ENCODE measurements at regions of chr11 and their contacts with region 1.

Region 1: DNA sequence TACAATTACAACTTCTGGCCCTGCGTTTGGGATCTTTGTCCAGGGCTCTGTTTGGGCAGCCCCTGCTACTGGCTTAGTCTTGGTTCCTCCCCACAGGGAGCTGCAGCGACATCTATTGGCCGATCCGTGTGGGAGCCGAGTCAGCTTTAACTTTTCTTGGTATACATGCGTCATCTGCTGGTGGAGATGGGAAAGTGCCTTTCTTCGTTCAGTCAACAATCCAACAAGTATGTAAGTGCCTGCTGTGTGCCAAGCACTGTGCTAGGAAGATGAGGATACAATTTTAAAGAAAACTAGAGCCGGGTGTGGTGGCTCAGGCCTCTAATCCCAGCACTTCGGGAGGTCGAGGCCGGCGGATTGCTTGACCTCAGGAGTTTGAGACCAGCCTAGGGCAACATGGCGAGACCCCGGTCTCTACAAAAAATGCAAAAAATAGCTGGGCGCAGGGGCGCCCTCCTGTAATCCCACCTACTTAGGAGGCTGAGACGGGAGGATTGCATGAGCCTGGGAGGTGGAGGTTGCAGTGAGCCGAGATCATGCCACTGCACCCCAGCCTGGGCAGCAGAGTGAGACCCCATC is 8.2 kb downstream of the TPBGL start:
- DNase-seq: peak; percentile 93
- ATAC-seq: peak; percentile 93
- H3K4me3 Mint-ChIP-seq: no peak overlapping the region
- H3K27ac Mint-ChIP-seq: no peak overlapping the region
- H3K4me1 Mint-ChIP-seq: no peaks in the 10 kb centered on the region
- H3K27me3 Mint-ChIP-seq: peaks cover 23% of the 10 kb centered on the region

Region 2: GRCh38 chr11:74773481-74773880 is 475.3 kb before region 1 on chr11:
- CTCF ChIA-PET with region 1: no interaction called
- POLR2A ChIA-PET with region 1: no interaction called
- DNase-seq: no peak
- ATAC-seq: no peak
- H3K4me3 Mint-ChIP-seq: no peak overlapping the region
- H3K27ac Mint-ChIP-seq: no peak overlapping the region
- H3K4me1 Mint-ChIP-seq: peaks cover 16% of the 10 kb centered on the region
- H3K27me3 Mint-ChIP-seq: no peaks in the 10 kb centered on the region

Region 3: GRCh38 chr11:75022759-75023396 is 225.9 kb before region 1 on chr11:
- CTCF ChIA-PET with region 1: interaction called, 26 read pairs
- POLR2A ChIA-PET with region 1: no interaction called
- DNase-seq: peak; percentile 81
- ATAC-seq: peak; percentile 90
- H3K4me3 Mint-ChIP-seq: no peak overlapping the region
- H3K27ac Mint-ChIP-seq: no peak overlapping the region
- H3K4me1 Mint-ChIP-seq: no peaks in the 10 kb centered on the region
- H3K27me3 Mint-ChIP-seq: no peaks in the 10 kb centered on the region

Region 4: DNA sequence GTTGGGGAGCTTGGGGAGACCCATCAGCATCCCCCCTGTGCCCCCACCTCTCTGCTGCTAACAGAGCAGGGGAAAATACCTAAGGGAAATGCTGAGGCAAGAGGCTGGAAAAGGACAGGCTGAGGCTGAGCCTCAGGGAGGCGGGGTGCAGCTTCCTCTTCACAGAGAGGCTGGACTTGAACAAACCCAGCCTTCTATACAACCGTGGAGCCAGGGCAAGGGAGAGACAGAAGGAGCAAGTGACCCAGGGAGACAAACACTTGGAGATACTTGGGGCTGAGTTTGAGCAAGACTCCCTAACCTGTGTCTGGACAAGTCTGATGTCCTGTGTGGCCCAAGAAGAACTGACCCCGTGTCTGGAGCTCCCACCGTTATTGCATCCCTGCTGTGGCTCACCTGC is 97.9 kb before region 1 on chr11 and contains the start of gene SLCO2B1:
- CTCF ChIA-PET with region 1: interaction called, 538 read pairs
- POLR2A ChIA-PET with region 1: no interaction called
- DNase-seq: no peak
- ATAC-seq: no peak
- H3K4me3 Mint-ChIP-seq: no peak within 1 kb of the TSS
- H3K27ac Mint-ChIP-seq: no peak within 1 kb of the TSS
- H3K4me1 Mint-ChIP-seq: peaks cover 27% of the 10 kb centered on the region
- H3K27me3 Mint-ChIP-seq: peaks cover 27% of the 10 kb centered on the region
- total RNA-seq, gene SLCO2B1: not detected

Region 5: DNA sequence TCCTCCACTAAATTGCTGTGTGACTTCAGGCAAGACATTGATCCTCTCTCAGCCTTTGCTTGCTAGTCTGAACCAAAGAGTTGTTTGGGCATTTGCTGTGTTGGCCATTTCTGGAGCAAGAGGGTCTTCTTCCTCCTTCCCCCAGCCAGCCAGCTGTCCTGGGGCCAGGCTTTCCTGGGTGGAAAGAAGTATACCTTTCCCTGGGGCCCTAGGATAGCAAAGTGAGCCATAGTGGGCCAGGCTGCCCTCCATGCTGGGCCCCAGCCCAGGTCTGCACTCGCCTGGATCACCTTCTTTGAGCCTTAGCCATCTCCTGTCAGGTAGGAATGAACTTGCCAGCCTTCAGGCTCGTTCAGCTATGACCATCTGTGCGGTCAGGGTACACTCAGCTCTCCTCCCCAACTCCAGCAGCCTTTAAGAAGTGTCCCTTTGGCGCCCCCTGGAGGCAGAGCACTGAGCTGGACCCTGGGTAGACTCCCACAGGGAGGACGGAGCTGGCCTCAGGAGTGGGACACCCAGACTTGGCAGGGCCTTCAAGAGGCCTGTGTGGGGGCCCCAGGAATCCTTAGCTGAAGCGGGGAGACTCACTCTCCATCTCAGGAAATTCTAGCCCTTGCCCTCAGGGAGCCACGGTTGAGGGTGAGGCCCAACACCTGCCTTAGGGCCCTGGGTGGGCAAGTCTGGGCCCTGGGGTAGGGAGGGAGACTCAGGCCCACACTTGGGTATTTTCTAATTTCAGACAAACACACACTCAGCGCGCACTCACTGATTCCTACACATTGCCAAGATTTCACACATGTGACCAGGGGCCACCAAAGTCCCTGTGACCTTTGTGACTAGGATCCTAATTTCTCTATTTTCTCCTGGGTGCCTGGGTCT is 43.9 kb before region 1 on chr11:
- CTCF ChIA-PET with region 1: interaction called, 16 read pairs
- POLR2A ChIA-PET with region 1: no interaction called
- DNase-seq: peak; percentile 89
- ATAC-seq: peak; percentile 98
- H3K4me3 Mint-ChIP-seq: no peak overlapping the region
- H3K27ac Mint-ChIP-seq: no peak overlapping the region
- H3K4me1 Mint-ChIP-seq: no peaks in the 10 kb centered on the region
- H3K27me3 Mint-ChIP-seq: peaks cover 2% of the 10 kb centered on the region

Region 6: DNA sequence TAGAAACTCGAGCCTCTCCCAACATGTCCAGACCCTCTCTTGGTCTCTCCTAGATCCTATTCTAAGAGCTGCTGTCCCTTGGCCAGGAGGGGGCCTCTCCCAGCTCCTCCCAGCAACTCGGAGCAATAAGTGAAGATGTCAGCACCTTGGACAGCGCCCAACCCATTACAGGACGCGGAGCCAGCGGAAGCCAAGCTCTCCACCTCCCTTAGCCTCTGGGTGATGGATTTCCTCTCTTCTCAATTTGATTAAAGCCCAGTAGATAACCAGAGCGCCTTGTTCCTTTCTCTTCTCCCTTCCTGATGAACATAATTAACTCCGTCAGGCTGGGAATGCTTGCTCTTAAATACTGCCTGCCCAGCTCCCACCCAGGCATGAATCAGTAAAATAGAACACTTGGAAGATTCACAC is 34.4 kb before region 1 on chr11:
- CTCF ChIA-PET with region 1: interaction called, 19 read pairs
- POLR2A ChIA-PET with region 1: no interaction called
- DNase-seq: peak; percentile 93
- ATAC-seq: peak; percentile 87
- H3K4me3 Mint-ChIP-seq: no peak overlapping the region
- H3K27ac Mint-ChIP-seq: no peak overlapping the region
- H3K4me1 Mint-ChIP-seq: no peaks in the 10 kb centered on the region
- H3K27me3 Mint-ChIP-seq: peaks cover 27% of the 10 kb centered on the region

Region 7: GRCh38 chr11:75263944-75264349 is 15.2 kb after region 1 on chr11:
- CTCF ChIA-PET with region 1: interaction called, 15 read pairs
- POLR2A ChIA-PET with region 1: no interaction called
- DNase-seq: peak; percentile 43
- ATAC-seq: no peak
- H3K4me3 Mint-ChIP-seq: no peak overlapping the region
- H3K27ac Mint-ChIP-seq: peak overlapping the region; percentile 74
- H3K4me1 Mint-ChIP-seq: peaks cover 45% of the 10 kb centered on the region
- H3K27me3 Mint-ChIP-seq: no peaks in the 10 kb centered on the region

Region 8: GRCh38 chr11:75270896-75271418 is 22.2 kb after region 1 on chr11:
- CTCF ChIA-PET with region 1: interaction called, 31 read pairs
- POLR2A ChIA-PET with region 1: no interaction called
- DNase-seq: peak; percentile 37
- ATAC-seq: no peak
- H3K4me3 Mint-ChIP-seq: no peak overlapping the region
- H3K27ac Mint-ChIP-seq: peak overlapping the region; percentile 72
- H3K4me1 Mint-ChIP-seq: peaks cover 25% of the 10 kb centered on the region
- H3K27me3 Mint-ChIP-seq: no peaks in the 10 kb centered on the region